CD8-positive, alpha-beta T cell (primary cell): ENCODE measurements at regions of chr15 and their contacts with region 1.

Region 1: DNA sequence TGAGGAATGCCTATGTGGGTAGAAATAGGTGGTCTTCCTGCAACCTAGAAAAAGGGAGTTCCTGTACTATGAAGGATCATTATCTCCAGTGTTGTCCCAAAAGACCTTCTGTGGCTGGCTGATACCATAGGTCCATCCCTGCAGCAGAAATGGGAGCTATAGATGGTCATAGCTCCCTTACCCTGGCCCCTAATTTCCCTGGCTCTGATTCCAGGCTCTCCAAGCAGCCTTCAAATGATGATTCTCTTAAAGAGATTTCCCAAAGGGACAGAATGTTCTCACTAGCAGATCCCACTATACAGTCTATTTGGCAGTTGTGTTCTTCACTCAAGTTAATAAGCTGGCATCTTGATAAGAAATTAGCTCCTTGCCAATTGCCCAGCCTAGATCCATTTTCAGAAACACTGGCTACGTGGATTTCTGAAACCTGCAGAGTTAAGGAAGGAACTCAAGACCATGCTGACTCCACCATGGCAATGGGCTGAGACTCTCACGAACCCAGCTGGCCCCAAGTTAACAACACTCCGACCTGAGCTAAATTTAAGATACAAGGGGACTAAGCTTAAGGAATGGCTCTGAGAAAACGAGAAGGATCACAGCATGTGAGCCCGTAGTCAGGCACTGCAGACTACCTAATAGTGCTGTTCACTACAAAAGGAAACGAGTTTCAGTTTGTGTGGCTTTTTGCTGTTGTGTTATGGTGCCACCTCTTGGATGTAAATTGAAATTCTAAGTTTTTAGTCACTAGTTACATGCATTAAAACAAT is 11.4 kb downstream of the C15orf40 start:
- DNase-seq: peak in 5 of 9 experiments; percentile 26 to 73 (median 27)
- ATAC-seq: peak; percentile 97
- H3K4me3 ChIP-seq: peak overlapping the region; percentile 24 to 29
- H3K4me3 Mint-ChIP-seq: peak overlapping the region; percentile 81
- H3K27ac ChIP-seq: peak overlapping the region; percentile 24 to 54
- H3K27ac Mint-ChIP-seq: peak overlapping the region; percentile 84
- H3K4me1 ChIP-seq: peaks cover 9% of the 10 kb centered on the region
- H3K4me1 Mint-ChIP-seq: peaks cover 12% of the 10 kb centered on the region
- H3K27me3 ChIP-seq: no peaks in the 10 kb centered on the region
- H3K27me3 Mint-ChIP-seq: no peaks in the 10 kb centered on the region
- CTCF ChIP-seq: peak; percentile 63

Region 2: DNA sequence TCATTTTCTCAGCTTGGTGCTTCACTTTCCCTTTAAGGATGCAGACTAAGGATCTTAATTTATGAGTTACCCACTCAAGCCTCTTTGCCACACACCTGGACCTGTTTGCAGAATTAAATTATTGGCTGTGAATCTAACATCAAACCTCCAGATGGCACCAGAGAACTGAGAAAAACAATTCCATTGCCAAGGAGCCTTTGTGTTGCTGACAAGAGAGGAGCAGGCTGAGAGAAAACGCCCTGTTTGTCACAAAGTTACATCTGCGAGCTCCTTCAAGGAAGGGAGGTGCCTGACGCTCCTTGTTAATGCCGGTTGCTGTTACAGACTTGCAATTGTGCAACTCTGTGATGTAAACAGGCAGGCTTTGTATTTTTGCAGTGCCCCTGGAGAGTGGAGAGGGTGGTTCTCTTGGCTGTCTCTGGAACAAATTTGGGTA is 1589.8 kb before region 1 on chr15:
- CTCF ChIA-PET with region 1: no interaction called
- POLR2A ChIA-PET with region 1: no interaction called
- intact Hi-C with region 1: no loop called
- DNase-seq: peak in 5 of 9 experiments; percentile 16 to 69 (median 52)
- ATAC-seq: peak; percentile 54
- H3K4me3 ChIP-seq: no peak overlapping the region
- H3K4me3 Mint-ChIP-seq: no peak overlapping the region
- H3K27ac ChIP-seq: no peak overlapping the region
- H3K27ac Mint-ChIP-seq: no peak overlapping the region
- H3K4me1 ChIP-seq: peaks cover 8% of the 10 kb centered on the region
- H3K4me1 Mint-ChIP-seq: peaks cover 12% of the 10 kb centered on the region
- H3K27me3 ChIP-seq: no peaks in the 10 kb centered on the region
- H3K27me3 Mint-ChIP-seq: peaks cover 11% of the 10 kb centered on the region
- CTCF ChIP-seq: peak; percentile 49

Region 3: GRCh38 chr15:82530606-82531379 is 469.3 kb before region 1 on chr15:
- CTCF ChIA-PET with region 1: interaction called, 22 read pairs
- POLR2A ChIA-PET with region 1: no interaction called
- intact Hi-C with region 1: loop called in 1 of 2 experiments (anchors 1 kb)
- DNase-seq: peak; percentile 49 to 85 (median 73)
- ATAC-seq: peak; percentile 94
- H3K4me3 ChIP-seq: peak overlapping the region; percentile 15 to 17
- H3K4me3 Mint-ChIP-seq: peak overlapping the region; percentile 76
- H3K27ac ChIP-seq: no peak overlapping the region
- H3K27ac Mint-ChIP-seq: peak overlapping the region; percentile 78
- H3K4me1 ChIP-seq: no peaks in the 10 kb centered on the region
- H3K4me1 Mint-ChIP-seq: peaks cover 5% of the 10 kb centered on the region
- H3K27me3 ChIP-seq: no peaks in the 10 kb centered on the region
- H3K27me3 Mint-ChIP-seq: no peaks in the 10 kb centered on the region
- CTCF ChIP-seq: peak; percentile 87

Region 4: GRCh38 chr15:82849556-82850512 is 150.3 kb before region 1 on chr15:
- CTCF ChIA-PET with region 1: interaction called, 3 read pairs
- POLR2A ChIA-PET with region 1: no interaction called
- intact Hi-C with region 1: loop called in 1 of 2 experiments (anchors 1 kb)
- DNase-seq: peak in 7 of 9 experiments; percentile 15 to 66 (median 41)
- ATAC-seq: peak; percentile 41
- H3K4me3 ChIP-seq: no peak overlapping the region
- H3K4me3 Mint-ChIP-seq: no peak overlapping the region
- H3K27ac ChIP-seq: no peak overlapping the region
- H3K27ac Mint-ChIP-seq: no peak overlapping the region
- H3K4me1 ChIP-seq: peaks cover 20% of the 10 kb centered on the region
- H3K4me1 Mint-ChIP-seq: peaks cover 21% of the 10 kb centered on the region
- H3K27me3 ChIP-seq: no peaks in the 10 kb centered on the region
- H3K27me3 Mint-ChIP-seq: no peaks in the 10 kb centered on the region
- CTCF ChIP-seq: peak; percentile 23

Region 5: DNA sequence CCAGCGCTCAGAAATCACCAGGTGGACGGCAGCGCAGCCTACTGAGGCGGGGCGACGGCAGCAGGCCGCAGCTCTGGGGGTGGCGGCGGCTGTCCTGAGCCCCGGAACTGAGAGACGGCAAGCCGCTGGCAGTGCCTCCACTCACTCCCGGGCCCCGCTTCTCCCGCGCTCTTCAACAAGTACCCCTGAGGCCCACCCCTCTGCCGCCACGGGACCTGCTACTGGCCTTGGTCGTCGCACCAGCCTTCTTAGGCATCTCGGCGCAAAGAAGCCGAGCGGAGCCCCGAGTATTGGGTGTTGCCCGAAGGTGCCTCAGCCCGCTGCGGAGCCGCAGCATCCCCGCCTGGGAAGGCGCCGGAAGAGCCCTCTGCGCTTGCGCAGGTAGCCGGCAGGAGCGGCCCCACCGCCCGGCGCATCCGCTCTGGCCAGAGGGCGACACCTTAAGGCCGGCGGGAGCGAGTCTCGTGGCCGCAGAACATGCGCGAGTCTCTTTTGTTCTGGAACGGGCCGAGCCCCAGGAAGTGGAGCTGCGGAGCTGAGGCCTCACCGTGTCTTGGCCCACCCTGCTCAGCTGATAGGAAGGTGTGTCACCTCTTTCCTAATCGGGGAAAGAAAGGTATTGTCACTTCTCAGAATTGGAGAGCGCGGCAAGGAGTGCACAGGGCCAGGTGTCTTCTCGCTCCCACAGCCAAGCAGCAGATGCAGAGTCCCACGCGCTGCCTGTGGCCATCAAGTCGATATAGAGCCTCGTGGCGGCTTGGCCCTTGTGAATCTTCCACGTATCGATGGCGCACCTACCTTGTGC is 11.4 kb after region 1 on chr15 and contains the start of gene C15orf40:
- CTCF ChIA-PET with region 1: interaction called, 13 read pairs
- POLR2A ChIA-PET with region 1: interaction called, 10 read pairs
- intact Hi-C with region 1: no loop called
- DNase-seq: peak; percentile 62 to 94 (median 86)
- ATAC-seq: peak; percentile 80
- H3K4me3 ChIP-seq: peak within 1 kb of the TSS; percentile 86 to 95
- H3K4me3 Mint-ChIP-seq: peak within 1 kb of the TSS; percentile 100
- H3K27ac ChIP-seq: peak within 1 kb of the TSS; percentile 75 to 79
- H3K27ac Mint-ChIP-seq: peak within 1 kb of the TSS; percentile 99
- H3K4me1 ChIP-seq: peaks cover 26% of the 10 kb centered on the region
- H3K4me1 Mint-ChIP-seq: peaks cover 58% of the 10 kb centered on the region
- H3K27me3 ChIP-seq: no peaks in the 10 kb centered on the region
- H3K27me3 Mint-ChIP-seq: no peaks in the 10 kb centered on the region
- CTCF ChIP-seq: no peak
- total RNA-seq, gene C15orf40: 11.8 to 12.3 TPM

Region 6: GRCh38 chr15:83092309-83092976 is 92.4 kb after region 1 on chr15:
- CTCF ChIA-PET with region 1: no interaction called
- POLR2A ChIA-PET with region 1: no interaction called
- intact Hi-C with region 1: no loop called
- DNase-seq: no peak
- ATAC-seq: no peak
- H3K4me3 ChIP-seq: no peak overlapping the region
- H3K4me3 Mint-ChIP-seq: no peak overlapping the region
- H3K27ac ChIP-seq: no peak overlapping the region
- H3K27ac Mint-ChIP-seq: no peak overlapping the region
- H3K4me1 ChIP-seq: no peaks in the 10 kb centered on the region
- H3K4me1 Mint-ChIP-seq: peaks cover 6% of the 10 kb centered on the region
- H3K27me3 ChIP-seq: no peaks in the 10 kb centered on the region
- H3K27me3 Mint-ChIP-seq: peaks cover 3% of the 10 kb centered on the region
- CTCF ChIP-seq: no peak

Region 7: DNA sequence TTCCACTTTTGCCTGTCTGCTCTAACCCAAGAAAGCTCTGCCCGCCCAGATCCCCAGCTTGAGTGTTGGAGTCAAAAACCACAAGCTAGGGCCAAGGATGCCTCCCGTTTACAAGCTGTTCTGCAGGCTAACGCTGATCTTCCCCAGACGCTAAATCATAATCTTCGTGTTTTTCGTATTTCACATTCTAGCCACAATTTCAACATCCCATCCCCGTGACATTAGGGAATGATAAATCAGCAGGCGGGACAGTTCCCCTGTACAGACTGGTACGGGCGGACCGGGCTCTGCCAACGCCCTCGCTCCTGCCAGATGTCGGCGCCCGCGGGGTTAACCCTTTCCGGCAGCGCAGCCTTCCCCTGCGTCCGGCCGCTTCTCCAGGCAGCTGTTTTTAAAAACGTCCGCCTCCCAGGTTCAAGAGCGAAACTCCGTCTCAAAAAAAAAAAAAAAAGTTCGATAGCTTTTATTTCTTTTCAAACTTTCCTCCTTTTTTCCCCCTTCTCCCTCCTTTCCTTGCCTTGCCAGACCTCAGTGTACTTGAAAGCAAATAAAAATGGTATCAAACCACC is 365.4 kb after region 1 on chr15:
- CTCF ChIA-PET with region 1: no interaction called
- POLR2A ChIA-PET with region 1: no interaction called
- intact Hi-C with region 1: no loop called
- DNase-seq: no peak
- ATAC-seq: no peak
- H3K4me3 ChIP-seq: no peak overlapping the region
- H3K4me3 Mint-ChIP-seq: peak overlapping the region; percentile 64
- H3K27ac ChIP-seq: no peak overlapping the region
- H3K27ac Mint-ChIP-seq: no peak overlapping the region
- H3K4me1 ChIP-seq: no peaks in the 10 kb centered on the region
- H3K4me1 Mint-ChIP-seq: peaks cover 12% of the 10 kb centered on the region
- H3K27me3 ChIP-seq: peaks cover 4 to 5% of the 10 kb centered on the region in 2 experiments
- H3K27me3 Mint-ChIP-seq: peaks cover 44% of the 10 kb centered on the region
- CTCF ChIP-seq: no peak

Region 8: GRCh38 chr15:83559310-83559966 is 559.4 kb after region 1 on chr15:
- CTCF ChIA-PET with region 1: no interaction called
- POLR2A ChIA-PET with region 1: no interaction called
- intact Hi-C with region 1: loop called in 1 of 2 experiments (anchors 10 kb)
- DNase-seq: peak in 5 of 9 experiments; percentile 22 to 54 (median 33)
- ATAC-seq: peak; percentile 42
- H3K4me3 ChIP-seq: no peak overlapping the region
- H3K4me3 Mint-ChIP-seq: no peak overlapping the region
- H3K27ac ChIP-seq: no peak overlapping the region
- H3K27ac Mint-ChIP-seq: no peak overlapping the region
- H3K4me1 ChIP-seq: no peaks in the 10 kb centered on the region
- H3K4me1 Mint-ChIP-seq: no peaks in the 10 kb centered on the region
- H3K27me3 ChIP-seq: no peaks in the 10 kb centered on the region
- H3K27me3 Mint-ChIP-seq: peaks cover 9% of the 10 kb centered on the region
- CTCF ChIP-seq: peak; percentile 69